SK-N-SH (cell line): ENCODE measurements at regions of chr9 and their contacts with region 1.

Region 1: DNA sequence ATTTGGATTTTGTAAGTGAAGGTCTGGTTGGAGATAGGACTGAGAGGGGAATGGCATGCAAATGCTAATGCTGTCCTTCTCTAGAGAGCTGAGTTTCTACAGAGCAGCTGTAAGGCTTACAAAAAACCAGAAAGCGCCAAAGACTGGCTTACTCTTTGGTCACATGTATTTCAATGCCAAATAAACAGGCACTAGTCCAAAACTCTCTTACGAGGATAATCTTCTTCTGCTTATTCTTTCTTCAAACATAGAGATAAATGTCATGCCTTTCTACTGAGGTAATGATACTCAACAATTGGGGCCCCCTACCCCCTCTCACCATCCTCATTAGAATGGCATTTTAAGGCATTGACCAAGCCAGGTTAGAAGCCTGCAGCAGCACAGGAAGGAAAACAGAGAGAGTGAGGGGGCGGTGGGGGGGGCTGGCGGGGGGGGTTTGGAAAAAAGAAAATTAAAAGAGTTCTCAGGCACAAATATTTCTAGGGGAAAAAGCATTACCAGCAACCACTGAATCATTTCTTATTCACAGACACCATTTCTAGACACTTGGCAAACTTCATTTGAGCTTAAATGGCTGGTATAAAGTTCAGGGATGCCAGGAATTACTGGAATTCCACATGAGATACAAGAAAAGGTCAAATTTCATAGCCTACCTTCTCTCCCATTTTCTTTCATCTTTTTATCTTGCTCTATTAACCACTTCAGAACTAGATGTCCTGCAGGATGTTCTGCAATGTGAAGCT is 34.0 kb downstream of the PUM3 start:
- DNase-seq: no peak
- H3K4me3 ChIP-seq: no peak overlapping the region
- H3K27ac ChIP-seq: peak overlapping the region; percentile 78 to 80; a peak in 3 of 4 replicates
- H3K4me1 ChIP-seq: peaks cover 0 to 14% of the 10 kb centered on the region in 2 experiments
- H3K27me3 ChIP-seq: no peaks in the 10 kb centered on the region
- CTCF ChIP-seq: no peak
- EP300 ChIP-seq: peak in 1 of 2 experiments; percentile 38; a peak in 1 of 4 replicates
- RAD21 ChIP-seq: no peak

Region 2: DNA sequence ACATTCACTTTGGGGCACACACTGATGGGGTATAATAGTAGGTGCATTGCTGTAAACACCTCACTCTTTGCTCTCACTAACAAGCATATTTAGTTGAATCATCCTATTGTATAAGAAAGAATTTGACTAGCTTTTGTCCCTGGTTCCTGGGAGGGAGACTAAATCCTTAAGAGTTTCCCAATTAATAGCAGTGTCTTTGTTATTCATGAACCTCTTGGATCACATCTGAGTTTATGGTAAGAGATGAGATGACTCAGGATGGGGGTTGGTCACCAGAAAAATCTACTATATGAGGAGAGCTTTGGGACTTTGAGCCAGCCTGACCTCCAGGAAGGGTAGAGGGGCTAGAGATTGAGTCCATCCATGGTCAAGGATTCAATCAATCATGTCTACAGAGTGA is 22.8 kb before region 1 on chr9:
- CTCF ChIA-PET with region 1: no interaction called
- POLR2A ChIA-PET with region 1: no interaction called
- DNase-seq: no peak
- H3K4me3 ChIP-seq: no peak overlapping the region
- H3K27ac ChIP-seq: no peak overlapping the region
- H3K4me1 ChIP-seq: no peaks in the 10 kb centered on the region; a peak in 1 of 4 replicates
- H3K27me3 ChIP-seq: no peaks in the 10 kb centered on the region
- CTCF ChIP-seq: no peak
- EP300 ChIP-seq: no peak
- RAD21 ChIP-seq: no peak

Region 3: DNA sequence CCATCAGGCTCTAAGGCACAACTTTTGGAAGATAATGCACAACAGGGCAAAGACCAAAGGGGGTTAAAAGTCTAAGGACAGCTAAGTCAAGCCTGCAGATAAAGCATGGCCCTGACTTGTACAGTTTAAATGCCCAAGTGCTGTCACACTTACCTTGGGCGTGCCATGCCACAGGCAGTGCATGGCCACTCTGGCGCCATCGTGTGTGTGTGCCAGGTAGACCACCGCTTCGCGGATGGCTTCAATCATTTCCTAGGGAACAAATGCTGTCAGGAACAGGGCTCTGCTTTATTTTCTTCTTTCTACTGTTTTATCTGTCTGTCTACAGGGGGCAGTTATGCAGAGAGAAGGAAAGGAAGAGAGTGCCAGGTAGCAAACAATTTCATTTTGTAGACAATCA is 14.7 kb after region 1 on chr9:
- CTCF ChIA-PET with region 1: interaction called, 12 read pairs
- POLR2A ChIA-PET with region 1: no interaction called
- DNase-seq: peak; percentile 24
- H3K4me3 ChIP-seq: no peak overlapping the region; a peak in 1 of 4 replicates
- H3K27ac ChIP-seq: no peak overlapping the region
- H3K4me1 ChIP-seq: no peaks in the 10 kb centered on the region
- H3K27me3 ChIP-seq: no peaks in the 10 kb centered on the region
- CTCF ChIP-seq: peak; percentile 26; the same call in 1 of the 2 replicates
- EP300 ChIP-seq: no peak
- RAD21 ChIP-seq: peak; percentile 50